Astrocyte of the spinal cord (primary cell): ENCODE measurements at regions of chr5 and their contacts with region 1.

Region 1: GRCh38 chr5:78537821-78538220 is 110.8 kb downstream of the LHFPL2 start:
- DNase-seq: peak; percentile 66
- H3K4me3 ChIP-seq: no peak overlapping the region
- CTCF ChIP-seq: peak; percentile 61

Region 2: GRCh38 chr5:78964887-78965286 is 427.1 kb after region 1 on chr5:
- in situ Hi-C with region 1: loop called (anchors 25 kb)
- DNase-seq: peak; percentile 81
- H3K4me3 ChIP-seq: no peak overlapping the region
- CTCF ChIP-seq: peak; percentile 46